A673 (cell line): ENCODE measurements at regions of chr20 and their contacts with region 1.

Region 1: GRCh38 chr20:51014797-51015722 is 7.8 kb downstream of the KCNG1 start:
- DNase-seq: peak; percentile 75
- H3K4me3 ChIP-seq: no peak overlapping the region
- H3K27ac ChIP-seq: no peak overlapping the region
- H3K4me1 ChIP-seq: peaks cover 6% of the 10 kb centered on the region
- H3K27me3 ChIP-seq: no peaks in the 10 kb centered on the region
- CTCF ChIP-seq: peak; percentile 91

Region 2: GRCh38 chr20:50872560-50873425 is 142.3 kb before region 1 on chr20:
- CTCF ChIA-PET with region 1: no interaction called
- POLR2A ChIA-PET with region 1: no interaction called
- intact Hi-C with region 1: no loop called
- DNase-seq: no peak
- H3K4me3 ChIP-seq: no peak overlapping the region
- H3K27ac ChIP-seq: no peak overlapping the region
- H3K4me1 ChIP-seq: no peaks in the 10 kb centered on the region
- H3K27me3 ChIP-seq: no peaks in the 10 kb centered on the region
- CTCF ChIP-seq: no peak

Region 3: GRCh38 chr20:51034476-51034875 is 19.4 kb after region 1 on chr20:
- CTCF ChIA-PET with region 1: interaction called, 5 read pairs
- POLR2A ChIA-PET with region 1: interaction called, 11 read pairs
- intact Hi-C with region 1: no loop called
- DNase-seq: no peak
- H3K4me3 ChIP-seq: no peak overlapping the region
- H3K27ac ChIP-seq: peak overlapping the region; percentile 83
- H3K4me1 ChIP-seq: peaks cover 21% of the 10 kb centered on the region
- H3K27me3 ChIP-seq: no peaks in the 10 kb centered on the region
- CTCF ChIP-seq: no peak

Region 4: GRCh38 chr20:51195419-51195901 is 180.4 kb after region 1 on chr20:
- CTCF ChIA-PET with region 1: no interaction called
- POLR2A ChIA-PET with region 1: no interaction called
- intact Hi-C with region 1: no loop called
- DNase-seq: peak; percentile 61
- H3K4me3 ChIP-seq: no peak overlapping the region
- H3K27ac ChIP-seq: no peak overlapping the region
- H3K4me1 ChIP-seq: no peaks in the 10 kb centered on the region
- H3K27me3 ChIP-seq: no peaks in the 10 kb centered on the region
- CTCF ChIP-seq: no peak

Region 5: GRCh38 chr20:51335329-51335841 is 320.3 kb after region 1 on chr20:
- CTCF ChIA-PET with region 1: no interaction called
- POLR2A ChIA-PET with region 1: no interaction called
- intact Hi-C with region 1: no loop called
- DNase-seq: peak; percentile 20
- H3K4me3 ChIP-seq: no peak overlapping the region
- H3K27ac ChIP-seq: no peak overlapping the region
- H3K4me1 ChIP-seq: no peaks in the 10 kb centered on the region
- H3K27me3 ChIP-seq: no peaks in the 10 kb centered on the region
- CTCF ChIP-seq: no peak